Mammary epithelial cell (primary cell): ENCODE measurements at regions of chr14 and their contacts with region 1.

Region 1: GRCh38 chr14:104715422-104715821 is 8.6 kb upstream of the ADSS1 start:
- DNase-seq: no peak
- H3K4me3 ChIP-seq: no peak overlapping the region
- H3K27ac ChIP-seq: no peak overlapping the region
- H3K4me1 ChIP-seq: no peaks in the 10 kb centered on the region
- H3K27me3 ChIP-seq: no peaks in the 10 kb centered on the region
- CTCF ChIP-seq: no peak

Region 2: GRCh38 chr14:104580961-104581360 is 134.5 kb before region 1 on chr14:
- CTCF ChIA-PET with region 1: no interaction called
- dilution Hi-C with region 1: no loop called
- in situ Hi-C with region 1: no loop called
- intact Hi-C with region 1: no loop called
- DNase-seq: peak; percentile 16
- H3K4me3 ChIP-seq: no peak overlapping the region
- H3K27ac ChIP-seq: no peak overlapping the region
- H3K4me1 ChIP-seq: peaks cover 3% of the 10 kb centered on the region
- H3K27me3 ChIP-seq: peaks cover 12% of the 10 kb centered on the region
- CTCF ChIP-seq: no peak

Region 3: GRCh38 chr14:104598039-104598942 is 117.1 kb before region 1 on chr14:
- CTCF ChIA-PET with region 1: no interaction called
- dilution Hi-C with region 1: loop called (anchors 10 kb)
- in situ Hi-C with region 1: no loop called
- intact Hi-C with region 1: no loop called
- DNase-seq: no peak
- H3K4me3 ChIP-seq: no peak overlapping the region
- H3K27ac ChIP-seq: no peak overlapping the region
- H3K4me1 ChIP-seq: no peaks in the 10 kb centered on the region
- H3K27me3 ChIP-seq: no peaks in the 10 kb centered on the region
- CTCF ChIP-seq: no peak

Region 4: DNA sequence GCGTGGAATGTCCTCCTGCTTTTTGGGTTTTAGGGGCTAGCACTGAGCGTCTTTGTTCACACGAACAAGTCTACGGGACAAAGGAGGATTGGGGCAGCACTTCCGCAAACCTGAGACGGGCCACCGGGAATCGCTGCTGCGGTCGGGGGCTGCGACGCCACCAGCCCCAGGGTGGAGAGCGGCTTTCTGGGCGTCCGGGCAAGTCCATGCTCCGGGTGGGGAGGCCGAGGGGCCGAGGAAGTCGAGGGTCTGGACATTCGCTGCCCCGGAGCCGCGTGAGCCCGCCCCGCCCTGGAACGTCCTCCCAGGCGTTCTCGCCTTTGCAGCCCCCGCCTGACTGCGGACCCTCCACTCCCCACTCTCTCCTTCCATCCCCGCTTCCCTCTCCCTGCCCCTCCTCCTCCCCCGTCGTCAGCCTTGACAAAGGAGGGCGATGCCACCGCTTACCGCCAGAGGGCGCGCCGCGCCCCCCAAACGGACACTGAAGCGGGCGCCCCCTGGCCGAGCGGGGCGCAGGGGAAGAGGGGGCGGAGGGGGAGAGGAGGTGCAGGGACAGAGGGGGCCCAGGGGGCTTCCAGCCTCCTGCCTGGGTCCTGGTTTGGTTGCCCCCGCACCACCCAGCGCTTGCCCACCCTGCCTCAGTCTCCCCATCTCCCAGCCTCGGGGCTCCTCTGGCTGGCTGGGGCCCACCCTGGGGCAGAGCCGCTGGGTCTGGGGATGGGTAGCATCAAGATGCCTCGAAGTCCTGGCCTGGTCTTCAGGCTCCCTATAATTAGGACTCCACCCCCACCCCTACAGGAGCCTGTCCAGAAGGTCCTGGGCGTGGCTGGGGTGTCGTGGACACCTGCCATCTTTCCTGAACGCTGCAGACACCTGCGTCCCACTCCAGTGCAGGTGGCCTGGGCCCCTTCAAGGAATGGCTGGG is 65.1 kb before region 1 on chr14:
- CTCF ChIA-PET with region 1: no interaction called
- dilution Hi-C with region 1: loop called (anchors 5 kb)
- in situ Hi-C with region 1: loop called in 1 of 2 experiments (anchors 10 kb)
- intact Hi-C with region 1: no loop called
- DNase-seq: no peak
- H3K4me3 ChIP-seq: peak overlapping the region; percentile 48 to 63 (median 59)
- H3K27ac ChIP-seq: no peak overlapping the region
- H3K4me1 ChIP-seq: peaks cover 9% of the 10 kb centered on the region
- H3K27me3 ChIP-seq: no peaks in the 10 kb centered on the region
- CTCF ChIP-seq: peak; percentile 83 to 99

Region 5: DNA sequence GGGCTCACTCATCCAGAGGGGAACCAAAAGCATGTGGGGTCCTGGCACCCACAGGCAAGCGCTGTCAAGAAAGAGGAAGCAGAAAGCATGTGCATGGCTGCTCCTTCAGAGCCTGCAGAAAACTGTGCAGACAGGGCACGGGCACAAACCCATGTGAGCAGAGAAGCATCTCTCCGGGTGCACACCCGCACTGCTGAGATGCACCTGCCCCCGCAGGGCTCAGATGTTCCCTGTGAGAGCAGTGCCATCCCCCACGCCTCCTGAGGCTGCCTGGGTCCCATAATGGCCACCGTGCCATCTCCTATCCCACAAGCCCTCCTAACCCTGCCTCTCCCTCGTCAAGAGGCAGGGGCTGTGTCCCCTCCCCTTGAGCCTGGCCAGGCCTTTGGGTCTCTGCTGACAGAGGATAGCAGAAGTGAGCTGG is 58.3 kb before region 1 on chr14:
- CTCF ChIA-PET with region 1: no interaction called
- dilution Hi-C with region 1: loop called (anchors 5 kb)
- in situ Hi-C with region 1: loop called in 1 of 2 experiments (anchors 10 kb)
- intact Hi-C with region 1: no loop called
- DNase-seq: no peak
- H3K4me3 ChIP-seq: no peak overlapping the region
- H3K27ac ChIP-seq: no peak overlapping the region
- H3K4me1 ChIP-seq: peaks cover 5% of the 10 kb centered on the region
- H3K27me3 ChIP-seq: no peaks in the 10 kb centered on the region
- CTCF ChIP-seq: no peak